ENCODE measurements at regions of chr10 and their contacts with region 1.

Region 1: GRCh38 chr10:26881600-26882331 is 21.0 kb upstream of the ABI1 start:
- DNase-seq: peak; percentile 76
- ATAC-seq: peak; percentile 91
- H3K4me3 ChIP-seq: no peak overlapping the region
- H3K27ac ChIP-seq: no peak overlapping the region
- H3K4me1 ChIP-seq: no peaks in the 10 kb centered on the region; the same call in 1 of the 2 replicates
- H3K27me3 ChIP-seq: peaks cover 9% of the 10 kb centered on the region
- CTCF ChIP-seq: peak; percentile 91
- POLR2A ChIP-seq: no peak
- RAD21 ChIP-seq: peak; percentile 91

Region 2: GRCh38 chr10:26612151-26612915 is 269.4 kb before region 1 on chr10:
- CTCF ChIA-PET with region 1: interaction called, 6 read pairs
- POLR2A ChIA-PET with region 1: no interaction called
- dilution Hi-C with region 1: no loop called
- in situ Hi-C with region 1: no loop called
- intact Hi-C with region 1: loop called (anchors 1 kb)
- DNase-seq: no peak
- ATAC-seq: no peak
- H3K4me3 ChIP-seq: no peak overlapping the region
- H3K27ac ChIP-seq: no peak overlapping the region
- H3K4me1 ChIP-seq: no peaks in the 10 kb centered on the region
- H3K27me3 ChIP-seq: no peaks in the 10 kb centered on the region
- CTCF ChIP-seq: no peak
- POLR2A ChIP-seq: no peak
- RAD21 ChIP-seq: no peak

Region 3: GRCh38 chr10:26682931-26683330 is 198.8 kb before region 1 on chr10:
- CTCF ChIA-PET with region 1: interaction called, 5 read pairs
- POLR2A ChIA-PET with region 1: no interaction called
- dilution Hi-C with region 1: no loop called
- in situ Hi-C with region 1: no loop called
- intact Hi-C with region 1: loop called (anchors 1 kb)
- DNase-seq: no peak
- ATAC-seq: no peak
- H3K4me3 ChIP-seq: no peak overlapping the region
- H3K27ac ChIP-seq: no peak overlapping the region
- H3K4me1 ChIP-seq: no peaks in the 10 kb centered on the region
- H3K27me3 ChIP-seq: no peaks in the 10 kb centered on the region
- CTCF ChIP-seq: no peak
- POLR2A ChIP-seq: no peak
- RAD21 ChIP-seq: no peak

Region 4: DNA sequence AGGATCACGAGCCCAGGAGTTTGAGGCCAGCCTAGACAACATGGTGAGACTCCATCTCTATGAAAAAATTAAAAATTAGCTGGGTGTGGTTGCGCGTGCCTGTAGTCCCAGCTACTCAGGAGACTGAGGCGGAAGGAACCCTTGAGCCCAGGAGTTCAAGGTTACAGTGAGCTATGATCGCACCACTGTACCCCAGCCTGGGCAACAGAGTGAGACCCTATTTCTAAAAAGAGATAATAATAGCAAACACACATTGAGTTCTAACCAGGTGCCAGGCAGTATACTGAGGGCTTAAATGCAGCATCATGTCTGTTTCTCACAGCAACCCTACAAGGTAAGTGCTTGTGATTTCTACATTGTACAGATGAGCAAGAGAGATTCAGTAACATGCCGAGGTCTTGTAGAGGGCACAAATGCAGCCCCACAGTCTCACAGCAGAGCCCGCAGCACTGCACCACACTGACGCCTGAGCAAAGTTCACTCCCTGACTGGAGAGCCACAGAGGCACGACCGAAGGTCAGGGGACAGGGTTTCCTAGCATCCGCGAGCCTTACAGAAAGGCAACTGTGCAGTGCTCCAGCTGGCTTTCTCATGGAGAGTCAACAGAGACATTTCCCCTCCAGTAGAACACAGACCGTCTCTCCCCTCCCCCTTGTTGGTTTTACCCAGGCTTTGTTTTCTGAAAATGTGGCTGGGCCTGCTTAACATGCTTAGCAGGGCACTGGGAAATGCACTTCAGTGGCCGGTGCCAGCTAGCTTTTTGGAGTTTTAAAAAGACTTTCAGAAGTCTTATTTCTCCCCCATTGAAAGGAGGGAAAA is 147.8 kb before region 1 on chr10:
- CTCF ChIA-PET with region 1: no interaction called
- POLR2A ChIA-PET with region 1: no interaction called
- dilution Hi-C with region 1: no loop called
- in situ Hi-C with region 1: loop called (anchors 5 kb)
- intact Hi-C with region 1: no loop called
- DNase-seq: no peak
- ATAC-seq: no peak
- H3K4me3 ChIP-seq: no peak overlapping the region
- H3K27ac ChIP-seq: no peak overlapping the region
- H3K4me1 ChIP-seq: no peaks in the 10 kb centered on the region
- H3K27me3 ChIP-seq: no peaks in the 10 kb centered on the region
- CTCF ChIP-seq: no peak
- POLR2A ChIP-seq: no peak
- RAD21 ChIP-seq: no peak

Region 5: DNA sequence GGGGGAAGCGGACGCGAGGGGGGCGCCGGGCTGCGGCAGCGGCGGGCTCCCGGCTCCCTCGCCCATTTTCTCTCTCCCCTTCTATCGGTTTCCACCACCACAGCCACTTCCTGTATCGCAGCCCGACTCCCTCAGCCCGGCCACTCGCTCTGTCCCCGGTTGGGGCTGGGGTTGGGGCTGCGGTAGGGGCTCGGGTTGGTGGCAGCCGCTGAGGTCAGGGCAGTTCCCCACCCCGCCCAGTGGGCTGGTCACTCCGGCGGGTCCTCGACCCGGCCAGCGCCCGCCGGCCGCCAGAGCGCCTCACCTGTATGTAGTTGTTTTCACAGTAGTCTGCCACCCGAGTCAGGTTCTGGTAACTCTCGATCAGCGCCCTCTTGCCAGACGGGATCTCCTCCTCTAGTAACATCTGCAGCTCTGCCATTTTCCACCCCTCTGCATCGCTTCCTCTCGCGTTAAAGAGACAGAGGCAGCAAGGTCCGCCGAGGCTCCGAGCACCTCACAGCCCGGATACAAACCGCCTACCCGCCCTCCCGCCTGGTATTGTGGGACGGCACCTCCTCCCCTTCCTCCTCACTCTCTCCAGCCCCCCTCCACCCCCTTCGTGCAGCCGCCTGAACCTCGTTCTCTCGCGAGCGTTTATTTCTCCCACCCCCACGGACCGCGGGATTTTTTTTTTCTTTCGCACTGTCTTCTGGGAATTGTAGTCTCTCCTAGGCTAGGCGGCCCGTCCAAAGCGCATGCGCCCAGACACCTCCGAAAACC is 21.1 kb before region 1 on chr10 and contains the start of gene ABI1:
- CTCF ChIA-PET with region 1: interaction called, 3 read pairs
- POLR2A ChIA-PET with region 1: no interaction called
- dilution Hi-C with region 1: no loop called
- in situ Hi-C with region 1: no loop called
- intact Hi-C with region 1: loop called (anchors 1 kb)
- DNase-seq: peak; percentile 98
- ATAC-seq: peak; percentile 92
- H3K4me3 ChIP-seq: peak within 1 kb of the TSS; percentile 86
- H3K27ac ChIP-seq: peak within 1 kb of the TSS; percentile 83
- H3K4me1 ChIP-seq: 0 out of 2 replicates have a peak, but pooled peaks cover 2% of the 10 kb centered on the region
- H3K27me3 ChIP-seq: peaks cover 5% of the 10 kb centered on the region
- CTCF ChIP-seq: no peak
- POLR2A ChIP-seq: peak; percentile 86
- RAD21 ChIP-seq: no peak
- total RNA-seq, gene ABI1: 60.8 and 71.3 TPM in 2 replicates

Measured in IMR-90 (cell line).